ENCODE measurements at regions of chr2 and their contacts with region 1.

Region 1: GRCh38 chr2:102449370-102449974 is 23.6 kb upstream of the SLC9A4 start:
- DNase-seq: peak; percentile 16 to 66 (median 52)
- ATAC-seq: peak; percentile 69
- H3K4me3 ChIP-seq: no peak overlapping the region
- H3K4me3 Mint-ChIP-seq: no peak overlapping the region
- H3K27ac ChIP-seq: no peak overlapping the region
- H3K27ac Mint-ChIP-seq: no peak overlapping the region
- H3K4me1 ChIP-seq: no peaks in the 10 kb centered on the region
- H3K4me1 Mint-ChIP-seq: peaks cover 0 to 10% (median 4%) of the 10 kb centered on the region in 7 donors
- H3K27me3 ChIP-seq: no peaks in the 10 kb centered on the region
- H3K27me3 Mint-ChIP-seq: no peaks in the 10 kb centered on the region

Region 2: DNA sequence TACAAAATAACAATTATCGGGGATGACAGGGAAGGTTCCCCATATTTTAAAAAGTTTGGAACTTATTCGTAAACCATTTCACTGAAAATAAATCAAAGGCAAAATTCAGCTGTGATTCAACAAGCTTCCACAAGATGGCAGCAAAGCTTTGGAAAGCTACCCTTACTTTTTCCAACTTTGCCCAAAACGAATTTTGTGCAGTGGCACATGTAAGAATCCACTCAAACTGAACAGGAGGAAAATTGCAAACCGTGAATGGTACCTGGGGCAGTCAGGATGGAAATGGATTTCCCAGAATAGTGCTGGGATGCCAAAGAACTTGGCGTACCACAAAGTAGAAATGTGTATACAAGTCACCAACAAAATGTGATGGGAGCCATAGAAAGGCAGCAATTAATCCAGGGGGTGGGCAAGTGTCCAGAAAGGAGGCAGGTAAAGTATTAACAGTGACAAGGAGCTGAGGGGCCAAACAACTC is 1436.7 kb before region 1 on chr2:
- CTCF ChIA-PET with region 1: no interaction called
- POLR2A ChIA-PET with region 1: no interaction called
- intact Hi-C with region 1: loop called in 1 of 2 experiments (anchors 2 kb)
- DNase-seq: peak in 7 of 9 donors; percentile 16 to 51 (median 38)
- ATAC-seq: no peak
- H3K4me3 ChIP-seq: no peak overlapping the region
- H3K4me3 Mint-ChIP-seq: no peak overlapping the region
- H3K27ac ChIP-seq: no peak overlapping the region
- H3K27ac Mint-ChIP-seq: no peak overlapping the region
- H3K4me1 ChIP-seq: no peaks in the 10 kb centered on the region
- H3K4me1 Mint-ChIP-seq: peaks cover 6 to 28% (median 12%) of the 10 kb centered on the region in 7 donors
- H3K27me3 ChIP-seq: no peaks in the 10 kb centered on the region
- H3K27me3 Mint-ChIP-seq: no peaks in the 10 kb centered on the region

Region 3: GRCh38 chr2:102005989-102006885 is 443.2 kb before region 1 on chr2:
- CTCF ChIA-PET with region 1: interaction called, 3 read pairs
- POLR2A ChIA-PET with region 1: no interaction called
- intact Hi-C with region 1: loop called in 1 of 2 experiments (anchors 1 kb)
- DNase-seq: peak in 3 of 9 donors; percentile 23 to 28 (median 24)
- ATAC-seq: peak; percentile 71
- H3K4me3 ChIP-seq: no peak overlapping the region
- H3K4me3 Mint-ChIP-seq: no peak overlapping the region
- H3K27ac ChIP-seq: no peak overlapping the region
- H3K27ac Mint-ChIP-seq: no peak overlapping the region
- H3K4me1 ChIP-seq: peaks cover 0 to 12% of the 10 kb centered on the region in 2 donors
- H3K4me1 Mint-ChIP-seq: peaks cover 0 to 9% (median 0%) of the 10 kb centered on the region in 7 donors
- H3K27me3 ChIP-seq: no peaks in the 10 kb centered on the region
- H3K27me3 Mint-ChIP-seq: peaks cover 0 to 16% (median 10%) of the 10 kb centered on the region in 5 donors

Region 4: GRCh38 chr2:102187496-102188150 is 261.8 kb before region 1 on chr2:
- CTCF ChIA-PET with region 1: no interaction called
- POLR2A ChIA-PET with region 1: no interaction called
- intact Hi-C with region 1: loop called (anchors 5 kb)
- DNase-seq: peak; percentile 2 to 35 (median 25)
- ATAC-seq: peak; percentile 89
- H3K4me3 ChIP-seq: peak overlapping the region; percentile 54
- H3K4me3 Mint-ChIP-seq: peak overlapping the region; percentile 75 to 89 (median 87)
- H3K27ac ChIP-seq: no peak overlapping the region
- H3K27ac Mint-ChIP-seq: peak overlapping the region in 2 of 9 donors; percentile 26 to 65
- H3K4me1 ChIP-seq: no peaks in the 10 kb centered on the region
- H3K4me1 Mint-ChIP-seq: peaks cover 4 to 22% (median 8%) of the 10 kb centered on the region in 7 donors
- H3K27me3 ChIP-seq: no peaks in the 10 kb centered on the region
- H3K27me3 Mint-ChIP-seq: peaks cover 11 to 43% (median 20%) of the 10 kb centered on the region in 5 donors

Region 5: GRCh38 chr2:102251042-102251848 is 198.2 kb before region 1 on chr2:
- CTCF ChIA-PET with region 1: interaction called, 12 read pairs
- POLR2A ChIA-PET with region 1: no interaction called
- intact Hi-C with region 1: loop called (anchors 1 kb)
- DNase-seq: peak; percentile 28 to 63 (median 57)
- ATAC-seq: peak; percentile 90
- H3K4me3 ChIP-seq: peak overlapping the region; percentile 75
- H3K4me3 Mint-ChIP-seq: peak overlapping the region; percentile 86 to 99 (median 94)
- H3K27ac ChIP-seq: no peak overlapping the region
- H3K27ac Mint-ChIP-seq: peak overlapping the region in 7 of 9 donors; percentile 56 to 94 (median 78)
- H3K4me1 ChIP-seq: peaks cover 0 to 18% of the 10 kb centered on the region in 2 donors
- H3K4me1 Mint-ChIP-seq: peaks cover 7 to 44% (median 14%) of the 10 kb centered on the region in 7 donors
- H3K27me3 ChIP-seq: no peaks in the 10 kb centered on the region
- H3K27me3 Mint-ChIP-seq: peaks cover 0 to 5% (median 2%) of the 10 kb centered on the region in 5 donors